ENCODE measurements at regions of chr1 and their contacts with region 1.

Region 1: GRCh38 chr1:84772428-84772943 is 82.2 kb upstream of the SSX2IP start:
- DNase-seq: peak; percentile 79 to 93 (median 85)
- H3K4me3 ChIP-seq: no peak overlapping the region
- H3K27ac ChIP-seq: no peak overlapping the region
- H3K4me1 ChIP-seq: no peaks in the 10 kb centered on the region
- H3K27me3 ChIP-seq: no peaks in the 10 kb centered on the region
- CTCF ChIP-seq: peak; percentile 85 to 96 (median 90)
- POLR2A ChIP-seq: no peak

Region 2: GRCh38 chr1:84133479-84133878 is 639.0 kb before region 1 on chr1:
- intact Hi-C with region 1: loop called in 1 of 2 experiments (anchors 10 kb)
- DNase-seq: no peak
- H3K4me3 ChIP-seq: no peak overlapping the region
- H3K27ac ChIP-seq: no peak overlapping the region
- H3K4me1 ChIP-seq: no peaks in the 10 kb centered on the region
- H3K27me3 ChIP-seq: no peaks in the 10 kb centered on the region
- CTCF ChIP-seq: no peak
- POLR2A ChIP-seq: no peak

Region 3: GRCh38 chr1:84724128-84724860 is 48.2 kb before region 1 on chr1:
- intact Hi-C with region 1: no loop called
- DNase-seq: peak in 1 of 7 donors; percentile 21
- H3K4me3 ChIP-seq: no peak overlapping the region
- H3K27ac ChIP-seq: no peak overlapping the region
- H3K4me1 ChIP-seq: peaks cover 0 to 6% of the 10 kb centered on the region in 2 donors
- H3K27me3 ChIP-seq: no peaks in the 10 kb centered on the region
- CTCF ChIP-seq: peak in 1 of 6 experiments; percentile 29
- POLR2A ChIP-seq: no peak

Region 4: GRCh38 chr1:84930329-84930728 is 157.8 kb after region 1 on chr1:
- intact Hi-C with region 1: loop called in 1 of 2 experiments (anchors 5 kb)
- DNase-seq: no peak
- H3K4me3 ChIP-seq: no peak overlapping the region
- H3K27ac ChIP-seq: no peak overlapping the region
- H3K4me1 ChIP-seq: no peaks in the 10 kb centered on the region
- H3K27me3 ChIP-seq: no peaks in the 10 kb centered on the region
- CTCF ChIP-seq: no peak
- POLR2A ChIP-seq: no peak

Measured in adrenal gland (tissue), 19 donors.